Caco-2 (cell line): ENCODE measurements at regions of chr4 and their contacts with region 1.

Region 1: GRCh38 chr4:183111452-183111885 is 12.4 kb downstream of the WWC2 start:
- DNase-seq: peak; percentile 53 to 65
- H3K4me3 ChIP-seq: no peak overlapping the region
- H3K4me3 Mint-ChIP-seq: peak overlapping the region; percentile 68
- H3K27ac Mint-ChIP-seq: peak overlapping the region; percentile 81
- H3K4me1 ChIP-seq: peaks cover 84% of the 10 kb centered on the region
- H3K4me1 Mint-ChIP-seq: peaks cover 56% of the 10 kb centered on the region
- H3K27me3 ChIP-seq: no peaks in the 10 kb centered on the region
- H3K27me3 Mint-ChIP-seq: no peaks in the 10 kb centered on the region
- CTCF ChIP-seq: no peak

Region 2: GRCh38 chr4:183030309-183030708 is 81.2 kb before region 1 on chr4:
- CTCF ChIA-PET with region 1: no interaction called
- POLR2A ChIA-PET with region 1: no interaction called
- intact Hi-C with region 1: no loop called
- DNase-seq: no peak
- H3K4me3 ChIP-seq: no peak overlapping the region
- H3K4me3 Mint-ChIP-seq: no peak overlapping the region
- H3K27ac Mint-ChIP-seq: no peak overlapping the region
- H3K4me1 ChIP-seq: no peaks in the 10 kb centered on the region
- H3K4me1 Mint-ChIP-seq: no peaks in the 10 kb centered on the region
- H3K27me3 ChIP-seq: no peaks in the 10 kb centered on the region
- H3K27me3 Mint-ChIP-seq: no peaks in the 10 kb centered on the region
- CTCF ChIP-seq: no peak

Region 3: DNA sequence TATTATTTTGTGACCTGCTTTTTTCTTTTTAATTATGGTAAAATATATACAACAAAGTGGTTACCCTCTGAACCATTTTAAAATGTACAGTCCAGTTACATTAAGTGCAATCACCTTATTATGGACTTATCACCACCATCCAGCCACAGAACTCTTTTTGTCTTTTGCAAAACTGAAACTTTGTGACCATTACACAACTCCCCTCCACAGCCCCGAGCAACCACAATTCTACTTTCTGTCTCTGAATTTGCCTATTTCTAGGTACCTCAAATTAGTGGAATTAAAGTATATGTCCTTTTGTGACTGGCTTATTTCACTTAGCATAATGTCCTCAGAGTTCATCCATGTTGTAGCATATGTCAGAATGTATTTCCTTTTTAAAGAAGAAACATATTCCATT is 51.7 kb before region 1 on chr4:
- CTCF ChIA-PET with region 1: no interaction called
- POLR2A ChIA-PET with region 1: no interaction called
- intact Hi-C with region 1: no loop called
- DNase-seq: no peak
- H3K4me3 ChIP-seq: no peak overlapping the region
- H3K4me3 Mint-ChIP-seq: no peak overlapping the region
- H3K27ac Mint-ChIP-seq: no peak overlapping the region
- H3K4me1 ChIP-seq: no peaks in the 10 kb centered on the region; the same call in 1 of the 2 replicates
- H3K4me1 Mint-ChIP-seq: peaks cover 7% of the 10 kb centered on the region
- H3K27me3 ChIP-seq: no peaks in the 10 kb centered on the region
- H3K27me3 Mint-ChIP-seq: peaks cover 4% of the 10 kb centered on the region
- CTCF ChIP-seq: no peak

Region 4: GRCh38 chr4:183080372-183081115 is 30.9 kb before region 1 on chr4:
- CTCF ChIA-PET with region 1: interaction called, 3 read pairs
- POLR2A ChIA-PET with region 1: no interaction called
- intact Hi-C with region 1: loop called (anchors 1 kb)
- DNase-seq: peak; percentile 53 to 54
- H3K4me3 ChIP-seq: no peak overlapping the region
- H3K4me3 Mint-ChIP-seq: peak overlapping the region; percentile 14
- H3K27ac Mint-ChIP-seq: peak overlapping the region; percentile 18
- H3K4me1 ChIP-seq: peaks cover 61% of the 10 kb centered on the region
- H3K4me1 Mint-ChIP-seq: peaks cover 45% of the 10 kb centered on the region
- H3K27me3 ChIP-seq: no peaks in the 10 kb centered on the region
- H3K27me3 Mint-ChIP-seq: no peaks in the 10 kb centered on the region
- CTCF ChIP-seq: no peak

Region 5: DNA sequence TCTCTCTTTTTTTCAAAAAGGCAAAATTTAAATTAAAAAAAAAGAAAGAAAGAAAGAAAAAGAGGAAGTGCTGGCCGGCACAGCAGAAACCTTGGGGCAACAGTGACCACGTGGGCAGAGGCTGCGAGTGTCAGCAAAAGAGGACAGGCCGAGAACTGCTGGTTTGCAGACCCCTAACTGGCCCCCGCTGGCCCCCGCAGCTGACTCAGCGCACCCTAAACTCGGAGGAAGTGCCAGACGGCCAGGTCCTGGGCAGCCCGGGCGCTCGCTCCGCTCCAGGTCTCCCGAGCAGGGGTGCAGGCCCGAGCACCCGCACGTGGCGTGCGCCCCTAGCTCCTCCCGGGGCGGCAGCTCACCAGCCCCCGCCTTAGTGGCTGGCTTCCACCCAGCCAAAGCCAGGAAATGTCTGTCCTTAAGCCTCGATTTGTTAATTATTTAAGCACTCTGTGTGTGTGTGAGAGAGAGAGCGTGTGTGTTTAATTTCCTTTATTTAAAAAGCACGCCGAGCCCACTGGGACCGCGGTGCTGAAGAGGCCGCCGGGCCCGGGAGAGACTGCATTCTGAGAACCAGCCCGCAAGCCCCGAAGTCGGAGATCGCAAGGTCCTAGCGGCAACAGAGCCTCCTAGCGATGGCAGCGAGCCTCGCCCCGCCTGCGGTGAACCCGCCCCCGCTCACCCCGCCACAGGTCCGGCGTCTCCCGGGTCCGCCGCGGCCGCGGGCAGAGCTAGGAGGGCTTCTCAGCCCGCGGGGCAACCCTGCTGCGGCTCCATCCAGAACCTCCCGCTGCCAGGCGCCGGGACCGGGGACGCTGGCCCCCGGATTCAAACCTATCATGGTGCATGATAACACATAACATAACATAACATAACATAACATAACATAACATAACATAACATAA is 287.0 kb after region 1 on chr4:
- CTCF ChIA-PET with region 1: no interaction called
- POLR2A ChIA-PET with region 1: no interaction called
- intact Hi-C with region 1: no loop called
- DNase-seq: peak; percentile 61 to 70
- H3K4me3 ChIP-seq: peak overlapping the region; percentile 26
- H3K4me3 Mint-ChIP-seq: peak overlapping the region; percentile 69
- H3K27ac Mint-ChIP-seq: peak overlapping the region; percentile 43
- H3K4me1 ChIP-seq: no peaks in the 10 kb centered on the region
- H3K4me1 Mint-ChIP-seq: no peaks in the 10 kb centered on the region
- H3K27me3 ChIP-seq: no peaks in the 10 kb centered on the region
- H3K27me3 Mint-ChIP-seq: no peaks in the 10 kb centered on the region
- CTCF ChIP-seq: peak in 1 of 2 experiments; percentile 38